CD14-positive monocyte (primary cell): ENCODE measurements at regions of chr7 and their contacts with region 1.

Region 1: DNA sequence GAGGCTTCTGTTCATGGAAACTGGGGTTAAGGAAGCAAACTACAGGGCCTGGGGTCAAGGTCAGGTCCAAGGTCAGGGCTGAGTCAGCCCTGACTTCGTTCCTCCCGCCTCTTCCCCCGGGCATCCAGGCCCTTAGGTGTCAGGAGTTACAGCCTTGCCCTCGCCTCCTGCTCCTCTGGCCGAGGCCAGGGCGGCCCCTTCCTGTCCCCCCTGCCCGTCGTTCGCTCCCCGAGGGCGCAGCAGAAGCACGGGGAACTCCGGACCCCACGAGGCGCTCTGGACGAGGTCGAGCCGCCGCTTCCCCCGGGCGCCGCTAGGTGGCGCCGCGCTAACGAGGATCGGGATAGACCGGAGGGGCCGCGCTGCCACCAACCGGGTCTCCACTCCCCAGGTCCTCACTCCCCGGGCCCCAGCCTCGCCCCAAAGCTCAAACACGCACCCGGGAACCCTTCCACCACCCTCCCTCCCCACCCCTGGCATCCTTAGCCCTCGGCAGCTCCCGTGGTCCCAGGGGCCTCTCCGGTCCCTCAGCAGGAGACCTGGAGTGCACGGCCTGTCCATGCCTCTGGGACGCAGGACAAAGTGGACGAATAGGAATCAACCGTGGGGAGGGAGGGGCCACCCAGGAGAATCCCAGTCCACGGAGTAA is 59.2 kb upstream of the MYL10 start:
- DNase-seq: peak; percentile 74 to 84 (median 75)
- H3K4me3 ChIP-seq: peak overlapping the region in 1 of 3 experiments; percentile 59
- H3K4me3 Mint-ChIP-seq: peak overlapping the region in 1 of 2 donors; percentile 48
- H3K27ac ChIP-seq: peak overlapping the region in 1 of 2 donors; percentile 51
- H3K27ac Mint-ChIP-seq: peak overlapping the region in 2 of 7 donors; percentile 58 to 62
- H3K4me1 ChIP-seq: peaks cover 17 to 23% of the 10 kb centered on the region in 2 donors
- H3K4me1 Mint-ChIP-seq: peaks cover 23% of the 10 kb centered on the region
- H3K27me3 ChIP-seq: no peaks in the 10 kb centered on the region
- H3K27me3 Mint-ChIP-seq: peaks cover 0 to 6% (median under 1%) of the 10 kb centered on the region in 3 donors
- CTCF ChIP-seq: peak; percentile 99

Region 2: GRCh38 chr7:101717628-101718357 is 29.5 kb after region 1 on chr7:
- intact Hi-C with region 1: loop called in 1 of 2 experiments (anchors 1 kb)
- DNase-seq: peak; percentile 98 to 99 (median 99)
- H3K4me3 ChIP-seq: peak overlapping the region in 1 of 3 experiments; percentile 60
- H3K4me3 Mint-ChIP-seq: peak overlapping the region; percentile 77 to 89
- H3K27ac ChIP-seq: peak overlapping the region; percentile 95 to 100
- H3K27ac Mint-ChIP-seq: peak overlapping the region; percentile 99 to 100 (median 100)
- H3K4me1 ChIP-seq: peaks cover 40% of the 10 kb centered on the region in 2 donors
- H3K4me1 Mint-ChIP-seq: peaks cover 31% of the 10 kb centered on the region
- H3K27me3 ChIP-seq: no peaks in the 10 kb centered on the region
- H3K27me3 Mint-ChIP-seq: peaks cover 0 to 2% (median 2%) of the 10 kb centered on the region in 3 donors
- CTCF ChIP-seq: no peak

Region 3: DNA sequence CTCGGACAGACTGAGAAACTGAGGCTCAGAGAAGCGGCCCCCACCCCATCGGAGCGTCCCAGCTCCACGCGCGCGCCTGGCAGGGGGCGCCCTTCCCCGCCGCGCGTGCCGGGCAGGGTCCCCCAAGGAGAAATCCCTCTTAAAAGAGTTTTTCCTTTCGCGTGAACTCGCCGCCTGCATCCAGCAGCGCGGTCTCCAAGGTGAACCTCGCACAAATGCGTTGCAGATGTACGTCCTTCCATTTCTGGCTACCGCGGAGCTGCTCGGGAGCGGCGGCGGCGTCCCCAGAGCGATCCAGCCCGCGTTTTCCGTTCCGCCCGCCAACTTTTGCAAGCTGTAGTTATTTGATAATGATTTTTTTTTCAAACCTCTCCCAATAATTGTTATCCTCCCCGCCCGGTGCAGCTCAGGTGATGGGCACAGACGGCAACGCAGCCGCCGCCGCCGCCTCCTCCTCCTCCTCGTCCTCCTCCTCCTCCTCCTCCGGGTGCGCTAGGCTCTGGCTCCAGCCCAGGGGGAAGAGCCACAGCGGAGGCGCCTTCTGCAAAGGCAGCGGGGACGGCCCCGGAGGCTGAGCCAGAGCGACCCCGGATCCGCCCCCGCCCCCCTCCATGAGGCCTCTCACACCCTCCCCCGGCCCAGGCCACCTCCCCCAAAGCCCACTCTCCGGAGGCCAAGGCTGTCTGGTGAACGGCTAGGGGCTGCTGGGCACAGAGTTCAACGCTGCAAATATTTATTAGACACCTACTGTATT is 55.1 kb after region 1 on chr7:
- intact Hi-C with region 1: loop called (anchors 5 kb)
- DNase-seq: peak; percentile 37 to 41 (median 39)
- H3K4me3 ChIP-seq: peak overlapping the region; percentile 58 to 77 (median 67)
- H3K4me3 Mint-ChIP-seq: peak overlapping the region; percentile 90 to 95
- H3K27ac ChIP-seq: peak overlapping the region in 1 of 2 donors; percentile 37
- H3K27ac Mint-ChIP-seq: peak overlapping the region in 6 of 7 donors; percentile 53 to 85 (median 80)
- H3K4me1 ChIP-seq: peaks cover 56 to 72% of the 10 kb centered on the region in 2 donors
- H3K4me1 Mint-ChIP-seq: peaks cover 60% of the 10 kb centered on the region
- H3K27me3 ChIP-seq: no peaks in the 10 kb centered on the region
- H3K27me3 Mint-ChIP-seq: peaks cover 0 to 6% (median 0%) of the 10 kb centered on the region in 3 donors
- CTCF ChIP-seq: peak; percentile 75

Region 4: GRCh38 chr7:101856473-101857357 is 168.4 kb after region 1 on chr7:
- intact Hi-C with region 1: loop called in 1 of 2 experiments (anchors 2 kb)
- DNase-seq: peak; percentile 95 to 97 (median 97)
- H3K4me3 ChIP-seq: peak overlapping the region; percentile 31 to 76 (median 48)
- H3K4me3 Mint-ChIP-seq: peak overlapping the region; percentile 80 to 85
- H3K27ac ChIP-seq: peak overlapping the region; percentile 96 to 98
- H3K27ac Mint-ChIP-seq: peak overlapping the region; percentile 99 to 100 (median 100)
- H3K4me1 ChIP-seq: peaks cover 64 to 67% of the 10 kb centered on the region in 2 donors
- H3K4me1 Mint-ChIP-seq: peaks cover 76% of the 10 kb centered on the region
- H3K27me3 ChIP-seq: no peaks in the 10 kb centered on the region
- H3K27me3 Mint-ChIP-seq: peaks cover 0 to 2% (median 1%) of the 10 kb centered on the region in 3 donors
- CTCF ChIP-seq: peak; percentile 76

Region 5: GRCh38 chr7:102044984-102045673 is 356.8 kb after region 1 on chr7:
- intact Hi-C with region 1: no loop called
- DNase-seq: peak; percentile 18 to 60 (median 35)
- H3K4me3 ChIP-seq: peak overlapping the region in 1 of 3 experiments; percentile 30
- H3K4me3 Mint-ChIP-seq: peak overlapping the region; percentile 43 to 69
- H3K27ac ChIP-seq: peak overlapping the region; percentile 9 to 52
- H3K27ac Mint-ChIP-seq: peak overlapping the region; percentile 24 to 86 (median 75)
- H3K4me1 ChIP-seq: peaks cover 21 to 23% of the 10 kb centered on the region in 2 donors
- H3K4me1 Mint-ChIP-seq: peaks cover 28% of the 10 kb centered on the region
- H3K27me3 ChIP-seq: no peaks in the 10 kb centered on the region
- H3K27me3 Mint-ChIP-seq: peaks cover 0 to 2% (median 0%) of the 10 kb centered on the region in 3 donors
- CTCF ChIP-seq: no peak